ENCODE measurements at regions of chr22 and their contacts with region 1.

Region 1: GRCh38 chr22:40263191-40263590 is 83.1 kb upstream of the ADSL start:
- DNase-seq: no peak
- H3K4me3 ChIP-seq: no peak overlapping the region
- H3K27ac ChIP-seq: no peak overlapping the region
- H3K4me1 ChIP-seq: peaks cover 25% of the 10 kb centered on the region
- H3K27me3 ChIP-seq: no peaks in the 10 kb centered on the region
- CTCF ChIP-seq: no peak
- POLR2A ChIP-seq: no peak

Region 2: GRCh38 chr22:40084246-40084645 is 178.9 kb before region 1 on chr22:
- intact Hi-C with region 1: no loop called
- DNase-seq: no peak
- H3K4me3 ChIP-seq: no peak overlapping the region
- H3K27ac ChIP-seq: no peak overlapping the region
- H3K4me1 ChIP-seq: peaks cover 20% of the 10 kb centered on the region
- H3K27me3 ChIP-seq: no peaks in the 10 kb centered on the region
- CTCF ChIP-seq: no peak
- POLR2A ChIP-seq: no peak

Region 3: GRCh38 chr22:40156001-40156516 is 107.1 kb before region 1 on chr22:
- intact Hi-C with region 1: no loop called
- DNase-seq: no peak
- H3K4me3 ChIP-seq: no peak overlapping the region
- H3K27ac ChIP-seq: no peak overlapping the region
- H3K4me1 ChIP-seq: peaks cover 11% of the 10 kb centered on the region
- H3K27me3 ChIP-seq: no peaks in the 10 kb centered on the region
- CTCF ChIP-seq: no peak
- POLR2A ChIP-seq: no peak

Region 4: DNA sequence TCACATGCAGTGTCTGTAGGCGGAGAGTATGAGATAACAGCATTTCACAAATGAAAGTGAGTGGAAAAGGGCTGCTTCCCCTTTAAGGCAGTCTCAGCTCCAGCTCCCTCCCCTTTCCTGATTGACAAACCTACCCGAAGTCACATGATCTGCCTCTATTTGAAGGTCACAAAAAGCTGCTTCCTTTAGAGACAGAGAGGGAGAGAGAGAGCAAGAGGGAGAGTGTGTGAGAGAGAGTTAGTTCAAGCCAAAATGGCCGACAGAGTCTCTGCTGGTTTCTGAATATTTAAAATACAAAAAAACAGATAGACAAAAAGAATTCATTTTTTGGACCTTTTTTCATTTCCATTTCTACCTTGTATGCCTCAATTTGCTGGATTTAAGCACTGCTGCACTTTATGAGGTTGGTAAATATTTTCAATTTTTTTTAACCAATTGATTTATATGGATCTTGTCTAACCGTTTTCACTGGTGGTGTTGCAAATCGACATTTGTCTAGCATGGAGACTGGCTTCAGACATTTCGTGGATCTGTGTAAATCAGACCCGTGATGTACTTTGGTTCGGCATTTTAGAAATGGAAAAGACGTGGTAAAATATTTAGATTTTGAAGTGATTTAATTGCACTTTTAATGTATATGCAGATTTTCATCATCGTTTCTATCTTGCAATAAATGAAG is 85.3 kb before region 1 on chr22 and contains the start of gene TNRC6B:
- intact Hi-C with region 1: loop called (anchors 10 kb)
- DNase-seq: peak in 1 of 2 donors; percentile 95
- H3K4me3 ChIP-seq: peak within 1 kb of the TSS; percentile 49 to 59
- H3K27ac ChIP-seq: peak within 1 kb of the TSS; percentile 83
- H3K4me1 ChIP-seq: peaks cover 65% of the 10 kb centered on the region
- H3K27me3 ChIP-seq: no peaks in the 10 kb centered on the region
- CTCF ChIP-seq: peak in 1 of 3 experiments; percentile 19
- POLR2A ChIP-seq: peak in 1 of 2 donors; percentile 98
- total RNA-seq, gene TNRC6B: 32.7 TPM

Region 5: DNA sequence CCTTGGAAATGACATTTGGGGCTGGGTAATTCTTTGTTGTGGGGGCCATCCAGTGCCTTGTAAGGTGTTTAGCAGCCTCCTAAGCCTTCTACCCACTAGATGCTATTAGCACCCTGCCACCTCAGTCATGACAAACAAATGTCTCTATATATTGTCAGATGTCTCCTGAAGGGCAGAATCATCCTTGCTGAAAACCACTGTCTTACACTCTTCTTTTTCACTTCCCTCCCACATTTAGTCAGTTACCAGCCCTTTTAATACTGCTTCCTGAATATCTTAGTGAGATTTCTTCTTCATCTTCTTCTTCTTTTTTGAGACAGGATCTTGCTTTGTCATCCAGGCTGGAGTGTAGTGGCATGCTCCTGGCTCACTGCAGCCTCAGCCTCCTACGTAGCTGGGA is 52.4 kb before region 1 on chr22:
- intact Hi-C with region 1: no loop called
- DNase-seq: no peak
- H3K4me3 ChIP-seq: no peak overlapping the region
- H3K27ac ChIP-seq: no peak overlapping the region
- H3K4me1 ChIP-seq: peaks cover 60% of the 10 kb centered on the region
- H3K27me3 ChIP-seq: no peaks in the 10 kb centered on the region
- CTCF ChIP-seq: no peak
- POLR2A ChIP-seq: no peak

Region 6: GRCh38 chr22:41832553-41833368 is 1569.6 kb after region 1 on chr22 and contains the start of gene SREBF2:
- intact Hi-C with region 1: no loop called
- DNase-seq: peak; percentile 98 to 99
- H3K4me3 ChIP-seq: peak within 1 kb of the TSS; percentile 70 to 87
- H3K27ac ChIP-seq: peak within 1 kb of the TSS; percentile 99
- H3K4me1 ChIP-seq: peaks cover 24% of the 10 kb centered on the region
- H3K27me3 ChIP-seq: no peaks in the 10 kb centered on the region
- CTCF ChIP-seq: no peak
- POLR2A ChIP-seq: peak; percentile 9 to 78
- total RNA-seq, gene SREBF2: 98.0 TPM